Activated CD4-positive, alpha-beta T cell treated with anti-CD3 and anti-CD28 coated beads for 36 hours (primary cell): ENCODE measurements at regions of chr10 and their contacts with region 1.

Region 1: DNA sequence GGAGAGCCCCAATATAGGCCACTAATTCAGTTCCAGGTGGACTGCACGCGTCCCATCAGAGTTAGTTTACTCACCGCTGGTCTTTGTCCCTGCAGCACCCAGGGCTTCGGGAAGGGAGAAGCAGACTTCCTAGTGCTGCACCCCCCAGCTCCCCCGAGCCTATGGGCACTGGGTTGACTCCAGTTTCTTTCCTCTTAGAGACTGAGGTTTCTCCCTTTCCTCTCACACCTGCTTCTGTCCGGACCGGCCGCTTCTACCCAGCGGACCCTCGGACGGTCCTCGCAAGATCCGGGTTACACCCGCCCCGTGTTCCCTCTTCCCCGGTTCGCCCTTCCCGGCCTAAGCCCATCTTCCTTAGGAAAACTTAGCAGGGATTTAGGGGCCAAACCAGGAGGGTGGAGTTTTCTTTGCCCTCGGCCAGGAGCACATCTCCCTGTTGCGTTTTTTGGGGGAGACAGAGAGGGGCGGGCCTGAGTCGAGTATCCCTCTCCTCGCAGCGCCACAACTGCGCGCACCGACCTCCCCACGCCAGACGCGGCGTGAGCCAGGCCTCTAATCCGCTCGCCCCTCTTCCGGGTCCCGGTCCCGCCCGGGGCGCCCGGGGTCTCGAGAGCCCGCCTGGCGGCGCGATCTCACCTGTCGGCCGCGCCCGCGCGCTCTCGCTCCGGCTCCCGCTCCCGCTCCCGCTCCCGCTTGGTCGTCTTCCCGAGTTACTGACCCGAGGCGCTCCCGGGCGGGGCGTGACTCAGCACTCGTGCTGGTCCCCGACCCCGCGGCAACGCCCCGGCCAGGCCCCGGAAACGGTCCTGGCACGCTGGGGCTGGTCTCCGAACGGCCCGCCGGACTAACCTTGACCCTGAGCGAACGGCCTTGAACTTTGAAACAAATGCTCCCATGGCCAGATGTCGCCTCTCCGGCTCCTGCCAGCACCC is at the start of gene AIFM2:
- DNase-seq: peak; percentile 61
- ATAC-seq: peak; percentile 81
- H3K4me3 Mint-ChIP-seq: peak within 1 kb of the TSS; percentile 77
- H3K27ac Mint-ChIP-seq: peak within 1 kb of the TSS; percentile 79
- H3K4me1 Mint-ChIP-seq: peaks cover 13% of the 10 kb centered on the region
- H3K27me3 Mint-ChIP-seq: no peaks in the 10 kb centered on the region
- total RNA-seq, gene AIFM2: 4.6 to 5.2 TPM

Region 2: GRCh38 chr10:70169649-70170364 is 37.4 kb after region 1 on chr10:
- CTCF ChIA-PET with region 1: no interaction called
- POLR2A ChIA-PET with region 1: interaction called, 4 read pairs
- intact Hi-C with region 1: loop called in 1 of 2 experiments (anchors 1 kb)
- DNase-seq: no peak
- ATAC-seq: peak; percentile 5
- H3K4me3 Mint-ChIP-seq: peak overlapping the region; percentile 94
- H3K27ac Mint-ChIP-seq: peak overlapping the region; percentile 84
- H3K4me1 Mint-ChIP-seq: peaks cover 64% of the 10 kb centered on the region
- H3K27me3 Mint-ChIP-seq: no peaks in the 10 kb centered on the region